K562 (cell line): ENCODE measurements at regions of chr10 and their contacts with region 1.

Region 1: GRCh38 chr10:60778214-60779029 is at the start of gene CDK1:
- DNase-seq: peak; percentile 99 to 100 (median 100)
- ATAC-seq: peak; percentile 95
- H3K4me3 ChIP-seq: peak within 1 kb of the TSS; percentile 88
- H3K27ac ChIP-seq: peak within 1 kb of the TSS; percentile 94
- H3K4me1 ChIP-seq: peaks cover 0 to 11% of the 10 kb centered on the region in 2 experiments; a peak in 4 of 5 replicates
- H3K27me3 ChIP-seq: no peaks in the 10 kb centered on the region
- CTCF ChIP-seq: no peak
- EP300 ChIP-seq: peak; percentile 41
- POLR2A ChIP-seq: peak; percentile 99
- RAD21 ChIP-seq: no peak
- polyA plus RNA-seq, gene CDK1: 568 to 685 TPM

Region 2: DNA sequence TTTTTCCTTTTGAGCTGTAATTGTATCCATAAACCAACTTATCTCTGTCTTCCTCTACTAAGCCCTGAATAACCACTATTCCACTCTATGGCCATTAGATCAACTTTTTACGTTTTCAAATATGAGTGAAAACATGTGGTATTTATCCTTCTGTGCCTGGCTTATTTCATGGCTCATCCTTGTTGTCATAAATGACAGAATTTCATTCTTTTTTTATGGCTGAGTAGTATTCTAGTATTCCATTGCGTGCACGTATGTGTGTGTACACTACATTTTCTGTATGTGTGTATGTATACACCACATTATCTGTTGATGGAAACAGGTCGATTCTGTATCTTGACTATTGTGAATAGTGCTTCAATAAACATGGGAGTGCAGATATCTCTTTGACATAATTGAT is 10.9 kb after region 1 on chr10:
- CTCF ChIA-PET with region 1: no interaction called
- POLR2A ChIA-PET with region 1: interaction called, 56 read pairs
- in situ Hi-C with region 1: no loop called
- intact Hi-C with region 1: no loop called
- DNase-seq: no peak
- ATAC-seq: peak; percentile 15
- H3K4me3 ChIP-seq: no peak overlapping the region
- H3K27ac ChIP-seq: no peak overlapping the region
- H3K4me1 ChIP-seq: peaks cover 0 to 2% of the 10 kb centered on the region in 2 experiments; a peak in 1 of 5 replicates
- H3K27me3 ChIP-seq: no peaks in the 10 kb centered on the region
- CTCF ChIP-seq: no peak
- EP300 ChIP-seq: no peak
- POLR2A ChIP-seq: peak; percentile 47; the same call in 1 of the 2 replicates
- RAD21 ChIP-seq: no peak

Region 3: GRCh38 chr10:60827791-60828488 is 49.5 kb after region 1 on chr10:
- CTCF ChIA-PET with region 1: no interaction called
- POLR2A ChIA-PET with region 1: no interaction called
- in situ Hi-C with region 1: no loop called
- intact Hi-C with region 1: loop called (anchors 2 kb)
- DNase-seq: peak in 2 of 4 experiments; percentile 75 to 89
- ATAC-seq: peak; percentile 72
- H3K4me3 ChIP-seq: no peak overlapping the region
- H3K27ac ChIP-seq: peak overlapping the region; percentile 74
- H3K4me1 ChIP-seq: peaks cover 0 to 19% of the 10 kb centered on the region in 2 experiments; a peak in 4 of 5 replicates
- H3K27me3 ChIP-seq: no peaks in the 10 kb centered on the region
- CTCF ChIP-seq: no peak
- EP300 ChIP-seq: peak; percentile 87
- POLR2A ChIP-seq: no peak
- RAD21 ChIP-seq: peak in 1 of 2 experiments; percentile 25; a peak in 2 of 4 replicates

Region 4: GRCh38 chr10:60863796-60864195 is 85.4 kb after region 1 on chr10:
- CTCF ChIA-PET with region 1: no interaction called
- POLR2A ChIA-PET with region 1: no interaction called
- in situ Hi-C with region 1: no loop called
- intact Hi-C with region 1: no loop called
- DNase-seq: no peak
- ATAC-seq: no peak
- H3K4me3 ChIP-seq: no peak overlapping the region
- H3K27ac ChIP-seq: no peak overlapping the region
- H3K4me1 ChIP-seq: no peaks in the 10 kb centered on the region
- H3K27me3 ChIP-seq: no peaks in the 10 kb centered on the region
- CTCF ChIP-seq: no peak
- EP300 ChIP-seq: no peak
- POLR2A ChIP-seq: no peak
- RAD21 ChIP-seq: no peak

Region 5: GRCh38 chr10:61140765-61141392 is 362.5 kb after region 1 on chr10:
- CTCF ChIA-PET with region 1: no interaction called
- POLR2A ChIA-PET with region 1: no interaction called
- in situ Hi-C with region 1: no loop called
- intact Hi-C with region 1: no loop called
- DNase-seq: peak; percentile 27 to 62 (median 38)
- ATAC-seq: peak; percentile 83
- H3K4me3 ChIP-seq: no peak overlapping the region
- H3K27ac ChIP-seq: no peak overlapping the region
- H3K4me1 ChIP-seq: no peaks in the 10 kb centered on the region
- H3K27me3 ChIP-seq: no peaks in the 10 kb centered on the region
- CTCF ChIP-seq: peak; percentile 52 to 79 (median 67); a peak in 5 of 6 replicates
- EP300 ChIP-seq: no peak
- POLR2A ChIP-seq: no peak
- RAD21 ChIP-seq: peak; percentile 70 to 79